ENCODE measurements at regions of chr16 and their contacts with region 1.

Region 1: GRCh38 chr16:30922960-30923535 is 324 bp upstream of the FBXL19 start:
- DNase-seq: peak; percentile 90 to 99 (median 94)
- ATAC-seq: peak; percentile 66
- H3K4me3 ChIP-seq: peak overlapping the region; percentile 75 to 96
- H3K4me3 Mint-ChIP-seq: peak overlapping the region; percentile 99
- H3K27ac ChIP-seq: peak overlapping the region; percentile 73 to 92
- H3K27ac Mint-ChIP-seq: peak overlapping the region; percentile 99
- H3K4me1 ChIP-seq: peaks cover 14% of the 10 kb centered on the region
- H3K4me1 Mint-ChIP-seq: peaks cover 22% of the 10 kb centered on the region
- H3K27me3 ChIP-seq: no peaks in the 10 kb centered on the region
- H3K27me3 Mint-ChIP-seq: no peaks in the 10 kb centered on the region
- CTCF ChIP-seq: no peak

Region 2: DNA sequence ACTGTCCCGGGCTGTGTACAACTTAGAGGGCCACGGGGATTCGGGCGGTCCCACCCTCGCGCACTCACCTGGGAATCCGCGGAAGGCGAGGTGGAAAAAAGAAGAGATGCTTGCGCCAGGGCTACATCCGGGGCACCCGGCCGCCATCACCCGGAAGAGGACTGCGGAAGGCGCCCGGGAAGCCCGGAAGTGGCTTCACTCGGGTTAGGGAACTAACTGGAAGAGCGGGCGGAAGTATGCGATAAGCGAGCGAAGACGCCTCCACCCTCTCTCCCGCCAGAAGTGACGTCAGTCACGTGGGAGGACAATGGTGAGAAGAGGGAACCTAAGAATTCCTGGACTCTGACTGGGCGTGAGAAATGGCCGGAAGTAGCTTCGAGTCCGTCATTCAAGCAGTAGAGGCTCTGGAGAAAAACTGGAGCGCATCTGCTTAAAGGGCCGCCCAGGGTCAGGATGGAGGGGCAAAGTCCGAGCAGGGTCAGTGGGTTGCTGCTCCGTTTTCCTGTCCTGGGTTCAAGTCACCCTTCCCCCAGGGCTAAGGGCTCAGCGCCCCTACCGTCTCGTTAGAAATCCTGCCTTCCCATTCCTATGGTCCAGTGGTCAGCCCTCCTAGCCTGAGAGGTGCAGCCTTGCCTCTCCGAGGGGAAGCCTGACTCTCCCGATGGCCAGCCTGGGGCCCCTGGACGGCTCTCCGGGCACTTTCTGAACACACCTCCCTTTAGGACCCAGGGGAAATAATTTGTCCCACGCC is 567.7 kb before region 1 on chr16 and contains the start of gene CD2BP2:
- CTCF ChIA-PET with region 1: no interaction called
- POLR2A ChIA-PET with region 1: no interaction called
- intact Hi-C with region 1: loop called in 1 of 2 experiments (anchors 10 kb)
- DNase-seq: peak; percentile 72 to 97 (median 86)
- ATAC-seq: peak; percentile 88
- H3K4me3 ChIP-seq: peak within 1 kb of the TSS; percentile 70 to 98
- H3K4me3 Mint-ChIP-seq: peak within 1 kb of the TSS; percentile 94
- H3K27ac ChIP-seq: peak within 1 kb of the TSS; percentile 63 to 98
- H3K27ac Mint-ChIP-seq: peak within 1 kb of the TSS; percentile 98
- H3K4me1 ChIP-seq: peaks cover 32% of the 10 kb centered on the region
- H3K4me1 Mint-ChIP-seq: peaks cover 27% of the 10 kb centered on the region
- H3K27me3 ChIP-seq: no peaks in the 10 kb centered on the region
- H3K27me3 Mint-ChIP-seq: no peaks in the 10 kb centered on the region
- CTCF ChIP-seq: no peak
- total RNA-seq, gene CD2BP2: 35.4 to 35.9 TPM

Region 3: GRCh38 chr16:30650369-30651123 is 272.5 kb before region 1 on chr16 and contains the start of gene PRR14:
- CTCF ChIA-PET with region 1: no interaction called
- POLR2A ChIA-PET with region 1: no interaction called
- intact Hi-C with region 1: loop called (anchors 1 kb)
- DNase-seq: peak; percentile 96 to 100 (median 98)
- ATAC-seq: peak; percentile 85
- H3K4me3 ChIP-seq: peak within 1 kb of the TSS; percentile 92 to 100
- H3K4me3 Mint-ChIP-seq: peak within 1 kb of the TSS; percentile 99
- H3K27ac ChIP-seq: peak within 1 kb of the TSS; percentile 86 to 94
- H3K27ac Mint-ChIP-seq: peak within 1 kb of the TSS; percentile 98
- H3K4me1 ChIP-seq: peaks cover 20% of the 10 kb centered on the region
- H3K4me1 Mint-ChIP-seq: peaks cover 22% of the 10 kb centered on the region
- H3K27me3 ChIP-seq: no peaks in the 10 kb centered on the region
- H3K27me3 Mint-ChIP-seq: no peaks in the 10 kb centered on the region
- CTCF ChIP-seq: no peak
- total RNA-seq, gene PRR14: 48.4 to 51.0 TPM

Region 4: GRCh38 chr16:30724641-30725417 is 198.2 kb before region 1 on chr16:
- CTCF ChIA-PET with region 1: no interaction called
- POLR2A ChIA-PET with region 1: no interaction called
- intact Hi-C with region 1: no loop called
- DNase-seq: no peak
- ATAC-seq: no peak
- H3K4me3 ChIP-seq: no peak overlapping the region
- H3K4me3 Mint-ChIP-seq: no peak overlapping the region
- H3K27ac ChIP-seq: no peak overlapping the region
- H3K27ac Mint-ChIP-seq: no peak overlapping the region
- H3K4me1 ChIP-seq: no peaks in the 10 kb centered on the region
- H3K4me1 Mint-ChIP-seq: peaks cover 13% of the 10 kb centered on the region
- H3K27me3 ChIP-seq: no peaks in the 10 kb centered on the region
- H3K27me3 Mint-ChIP-seq: no peaks in the 10 kb centered on the region
- CTCF ChIP-seq: no peak

Region 5: DNA sequence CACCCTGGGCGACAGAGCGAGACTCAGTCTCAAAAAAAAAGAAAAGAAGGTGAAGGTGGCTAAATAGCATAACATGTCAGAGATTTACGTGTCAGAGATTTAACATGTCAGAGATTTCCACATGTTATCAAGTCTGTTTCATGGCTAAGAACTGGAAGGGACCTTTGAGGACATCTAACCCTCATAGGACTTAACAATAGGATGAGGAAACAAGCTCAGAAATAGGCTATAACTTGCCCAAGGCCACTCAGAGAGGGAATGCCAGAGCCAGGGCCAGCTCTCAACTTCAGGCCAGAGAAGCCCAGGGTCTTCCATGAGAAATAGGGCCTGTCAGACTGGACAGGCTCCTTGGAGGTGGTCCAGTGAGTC is 109.2 kb before region 1 on chr16:
- CTCF ChIA-PET with region 1: interaction called, 3 read pairs
- POLR2A ChIA-PET with region 1: no interaction called
- intact Hi-C with region 1: loop called in 1 of 2 experiments (anchors 1 kb)
- DNase-seq: no peak
- ATAC-seq: peak; percentile 2
- H3K4me3 ChIP-seq: peak overlapping the region; percentile 49 to 56
- H3K4me3 Mint-ChIP-seq: peak overlapping the region; percentile 82
- H3K27ac ChIP-seq: peak overlapping the region; percentile 72
- H3K27ac Mint-ChIP-seq: peak overlapping the region; percentile 88
- H3K4me1 ChIP-seq: peaks cover 18% of the 10 kb centered on the region
- H3K4me1 Mint-ChIP-seq: peaks cover 9% of the 10 kb centered on the region
- H3K27me3 ChIP-seq: no peaks in the 10 kb centered on the region
- H3K27me3 Mint-ChIP-seq: no peaks in the 10 kb centered on the region
- CTCF ChIP-seq: no peak

Region 6: GRCh38 chr16:30902029-30902972 is 20.7 kb before region 1 on chr16:
- CTCF ChIA-PET with region 1: interaction called, 6 read pairs
- POLR2A ChIA-PET with region 1: interaction called, 4 read pairs
- intact Hi-C with region 1: loop called (anchors 1 kb)
- DNase-seq: peak in 8 of 9 experiments; percentile 42 to 82 (median 56)
- ATAC-seq: peak; percentile 81
- H3K4me3 ChIP-seq: peak overlapping the region; percentile 52 to 77
- H3K4me3 Mint-ChIP-seq: peak overlapping the region; percentile 95
- H3K27ac ChIP-seq: peak overlapping the region; percentile 74 to 75
- H3K27ac Mint-ChIP-seq: peak overlapping the region; percentile 97
- H3K4me1 ChIP-seq: peaks cover 33% of the 10 kb centered on the region
- H3K4me1 Mint-ChIP-seq: peaks cover 36% of the 10 kb centered on the region
- H3K27me3 ChIP-seq: no peaks in the 10 kb centered on the region
- H3K27me3 Mint-ChIP-seq: no peaks in the 10 kb centered on the region
- CTCF ChIP-seq: no peak

Region 7: GRCh38 chr16:31032736-31033708 is 110.0 kb after region 1 on chr16 and contains the start of gene STX4:
- CTCF ChIA-PET with region 1: no interaction called
- POLR2A ChIA-PET with region 1: no interaction called
- intact Hi-C with region 1: loop called in 1 of 2 experiments (anchors 1 kb)
- DNase-seq: peak; percentile 93 to 100 (median 97)
- ATAC-seq: peak; percentile 73
- H3K4me3 ChIP-seq: peak within 1 kb of the TSS; percentile 84 to 88
- H3K4me3 Mint-ChIP-seq: peak within 1 kb of the TSS; percentile 98
- H3K27ac ChIP-seq: peak within 1 kb of the TSS; percentile 98 to 99
- H3K27ac Mint-ChIP-seq: peak within 1 kb of the TSS; percentile 99
- H3K4me1 ChIP-seq: peaks cover 18% of the 10 kb centered on the region
- H3K4me1 Mint-ChIP-seq: peaks cover 28% of the 10 kb centered on the region
- H3K27me3 ChIP-seq: no peaks in the 10 kb centered on the region
- H3K27me3 Mint-ChIP-seq: no peaks in the 10 kb centered on the region
- CTCF ChIP-seq: no peak
- total RNA-seq, gene STX4: 63.8 to 69.9 TPM

Region 8: DNA sequence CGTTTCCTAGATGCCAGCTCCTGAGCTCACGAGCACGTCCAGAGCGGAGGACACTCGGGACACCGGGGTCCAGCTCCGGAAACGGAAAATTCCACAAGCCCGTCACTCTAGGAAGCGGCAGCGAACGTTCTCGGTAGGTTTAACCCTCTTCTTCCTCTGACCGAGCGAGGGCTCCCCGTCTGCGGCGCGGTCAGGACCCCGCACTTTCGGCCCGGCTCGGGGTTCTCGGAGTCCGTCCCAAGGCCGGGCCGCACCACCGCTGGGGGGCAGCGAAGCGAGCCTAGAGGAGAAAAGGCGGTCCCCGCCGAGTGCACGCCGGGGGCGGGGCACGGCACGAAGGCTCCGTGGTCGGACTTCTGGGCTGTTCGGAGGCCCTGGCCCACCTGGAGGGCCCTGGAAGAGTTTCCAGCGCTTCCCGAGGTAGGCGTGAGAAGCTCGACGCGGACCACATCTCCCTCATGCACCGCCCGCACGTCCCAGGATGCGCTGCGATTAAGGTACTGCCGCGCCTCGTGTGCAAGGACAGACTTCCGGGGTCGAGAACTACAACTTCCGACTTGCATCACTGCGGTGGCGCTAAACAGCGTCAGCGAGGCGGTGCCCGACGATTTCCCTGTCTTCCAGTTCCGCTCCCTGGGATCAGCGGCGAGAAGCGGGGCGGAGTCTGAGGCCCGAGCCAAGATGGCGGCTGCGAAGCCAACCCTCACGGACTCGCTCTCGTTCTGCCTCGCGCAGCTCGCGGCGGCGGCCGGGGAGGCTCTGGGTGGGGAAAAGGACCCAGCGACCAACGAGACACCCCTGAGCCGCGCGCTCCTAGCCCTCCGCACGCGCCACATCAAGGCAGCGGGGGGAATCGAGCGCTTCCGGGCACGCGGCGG is 536.0 kb after region 1 on chr16 and contains the start of gene ARMC5:
- CTCF ChIA-PET with region 1: no interaction called
- POLR2A ChIA-PET with region 1: no interaction called
- intact Hi-C with region 1: loop called in 1 of 2 experiments (anchors 1 kb)
- DNase-seq: peak; percentile 91 to 99 (median 96)
- ATAC-seq: peak; percentile 69
- H3K4me3 ChIP-seq: peak within 1 kb of the TSS; percentile 73 to 99
- H3K4me3 Mint-ChIP-seq: peak within 1 kb of the TSS; percentile 95
- H3K27ac ChIP-seq: peak within 1 kb of the TSS; percentile 97 to 100
- H3K27ac Mint-ChIP-seq: peak within 1 kb of the TSS; percentile 99
- H3K4me1 ChIP-seq: peaks cover 40% of the 10 kb centered on the region
- H3K4me1 Mint-ChIP-seq: peaks cover 50% of the 10 kb centered on the region
- H3K27me3 ChIP-seq: no peaks in the 10 kb centered on the region
- H3K27me3 Mint-ChIP-seq: no peaks in the 10 kb centered on the region
- CTCF ChIP-seq: peak; percentile 44
- total RNA-seq, gene ARMC5: 22.4 to 24.0 TPM

Measured in CD8-positive, alpha-beta T cell (primary cell).